Heart right ventricle (tissue), 16 donors: ENCODE measurements at regions of chr1 and their contacts with region 1.

Region 1: DNA sequence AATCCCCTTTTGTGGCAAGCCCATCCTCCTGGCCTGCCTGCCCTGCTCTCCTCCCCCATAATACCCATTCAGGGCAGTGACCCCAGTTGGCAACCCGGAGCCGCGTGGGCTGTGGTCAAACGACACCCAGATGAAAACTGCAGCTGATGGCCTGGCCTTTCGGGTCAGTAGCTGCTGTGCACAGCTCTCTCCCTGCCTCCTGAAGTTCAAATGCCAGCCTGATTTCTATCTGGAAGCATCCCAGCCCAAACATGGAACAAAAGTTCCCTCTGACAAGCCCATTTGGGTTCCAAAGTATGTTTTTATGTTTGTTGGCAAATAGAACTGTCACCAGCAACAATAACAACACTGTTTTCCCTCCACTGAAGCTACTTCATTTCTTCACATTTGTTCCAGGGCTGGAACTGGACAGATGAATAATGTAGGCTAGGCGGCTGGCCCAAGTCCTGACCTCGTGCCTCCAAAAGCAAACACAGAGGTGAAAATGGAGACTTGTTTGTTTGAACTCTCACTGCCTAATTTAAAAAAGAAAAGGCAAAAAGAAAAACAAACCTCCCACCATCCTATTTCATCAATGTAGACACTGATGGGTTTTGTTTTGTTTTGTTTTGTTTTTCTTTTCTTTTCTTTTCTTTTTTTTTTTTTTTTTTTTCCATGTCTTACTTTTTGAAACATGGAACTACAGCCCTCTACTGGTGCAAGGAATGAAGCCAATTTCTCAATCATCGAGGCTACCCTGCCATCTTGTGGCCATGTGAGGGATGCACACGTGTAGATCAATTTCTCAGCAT is 179.0 kb downstream of the ADSS2 start:
- DNase-seq: peak; percentile 25 to 58
- ATAC-seq: peak; percentile 72 to 94 (median 78)
- H3K4me3 ChIP-seq: no peak overlapping the region
- H3K27ac ChIP-seq: peak overlapping the region in 5 of 10 donors; percentile 2 to 46 (median 21)
- H3K4me1 ChIP-seq: peaks cover 0 to 19% (median 0%) of the 10 kb centered on the region in 9 donors
- H3K27me3 ChIP-seq: no peaks in the 10 kb centered on the region
- CTCF ChIP-seq: peak; percentile 84 to 98 (median 92)

Region 2: DNA sequence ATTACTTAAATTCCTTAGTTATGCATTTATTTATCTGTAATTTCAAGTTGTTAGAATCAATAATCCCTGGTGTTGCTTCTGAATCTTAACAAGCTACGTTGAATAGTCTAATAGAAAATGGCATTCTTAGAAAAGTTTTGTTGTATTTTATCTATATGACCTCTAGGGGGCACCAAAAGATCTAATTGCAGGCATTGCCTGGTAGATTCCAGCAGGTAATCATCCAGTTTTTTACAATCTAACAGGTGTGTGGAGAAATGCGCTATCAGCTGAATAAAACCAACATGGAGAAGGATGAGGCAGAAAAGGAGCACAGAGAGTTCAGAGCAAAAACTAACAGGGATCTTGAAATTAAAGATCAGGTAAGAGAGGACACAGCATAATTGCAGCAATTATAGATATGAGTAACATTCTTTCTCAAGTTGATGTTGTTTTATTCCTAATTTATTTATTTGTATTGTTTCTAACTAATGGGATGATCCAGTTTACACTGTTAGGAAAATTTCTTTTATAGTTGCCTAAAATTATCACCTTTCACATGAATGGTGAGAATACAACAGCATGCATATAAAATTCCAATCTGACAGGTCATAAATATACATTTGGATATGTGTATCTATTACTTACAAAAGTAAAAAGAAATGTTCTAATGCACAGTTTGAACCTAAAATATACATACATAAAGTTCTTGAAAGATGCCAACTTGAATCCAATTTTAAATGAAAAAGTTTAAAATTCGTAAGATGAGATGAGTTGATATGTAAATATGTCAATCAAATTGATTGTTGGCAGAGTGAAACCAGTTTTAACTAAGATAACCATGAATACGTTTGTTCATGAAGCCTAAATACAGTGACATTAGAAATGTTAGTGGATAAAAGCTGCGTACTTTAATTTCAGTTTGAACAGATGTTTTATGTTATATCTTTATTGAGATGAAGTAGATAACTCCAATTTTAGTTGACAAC is 928.4 kb before region 1 on chr1:
- intact Hi-C with region 1: loop called in 9 of 10 experiments (anchors 1 to 5 kb)
- DNase-seq: no peak
- ATAC-seq: peak in 2 of 8 donors; percentile 34 to 53
- H3K4me3 ChIP-seq: no peak overlapping the region
- H3K27ac ChIP-seq: no peak overlapping the region
- H3K4me1 ChIP-seq: peaks cover 0 to 6% (median 0%) of the 10 kb centered on the region in 9 donors
- H3K27me3 ChIP-seq: no peaks in the 10 kb centered on the region
- CTCF ChIP-seq: peak; percentile 58 to 84 (median 74)

Region 3: GRCh38 chr1:243471754-243472745 is 800.6 kb before region 1 on chr1:
- intact Hi-C with region 1: loop called in 1 of 10 experiments (anchors 10 kb)
- DNase-seq: no peak
- ATAC-seq: peak in 5 of 8 donors; percentile 22 to 41 (median 34)
- H3K4me3 ChIP-seq: peak overlapping the region in 1 of 10 donors; percentile 45
- H3K27ac ChIP-seq: no peak overlapping the region
- H3K4me1 ChIP-seq: peaks cover 0 to 24% (median 12%) of the 10 kb centered on the region in 9 donors
- H3K27me3 ChIP-seq: no peaks in the 10 kb centered on the region
- CTCF ChIP-seq: no peak

Region 4: DNA sequence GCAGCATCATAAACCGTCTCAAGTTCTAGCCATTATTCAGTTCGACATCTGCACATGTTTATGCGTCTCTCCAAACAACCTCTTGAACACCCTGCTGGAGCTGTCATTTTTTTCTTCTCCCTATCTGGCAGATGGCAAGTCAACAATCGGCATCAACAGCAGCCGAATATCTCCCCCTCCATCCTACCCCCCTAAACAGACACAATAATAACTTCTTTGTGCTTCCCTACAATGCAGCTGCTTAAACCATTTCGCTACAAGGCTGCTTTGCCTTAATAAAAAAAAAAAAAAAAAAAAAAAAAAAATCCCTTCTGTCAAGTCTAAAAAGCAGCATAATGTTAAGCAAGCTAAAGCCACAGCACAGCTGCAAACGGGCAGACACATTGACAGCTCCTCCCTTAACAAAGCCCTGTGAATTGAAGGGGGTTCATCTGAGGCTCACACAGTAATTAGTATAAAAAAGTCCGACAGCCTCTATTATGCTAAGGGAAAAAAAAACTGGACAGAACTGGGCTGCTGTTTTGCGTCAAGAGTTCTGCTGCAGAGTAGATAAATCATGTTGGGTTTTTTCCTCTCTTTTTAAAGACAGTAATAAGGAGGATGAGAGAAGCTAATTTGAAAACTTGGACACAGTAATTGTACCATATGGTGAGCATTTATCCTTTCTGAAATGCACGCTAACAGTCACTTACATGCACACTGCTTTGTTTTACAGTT is 559.0 kb before region 1 on chr1:
- intact Hi-C with region 1: loop called in 6 of 10 experiments (anchors 2 to 10 kb)
- DNase-seq: peak in 1 of 2 donors; percentile 17
- ATAC-seq: peak in 7 of 8 donors; percentile 31 to 89 (median 83)
- H3K4me3 ChIP-seq: peak overlapping the region in 3 of 10 donors; percentile 5 to 25 (median 11)
- H3K27ac ChIP-seq: peak overlapping the region in 3 of 10 donors; percentile 3 to 22 (median 10)
- H3K4me1 ChIP-seq: peaks cover 0 to 38% (median 11%) of the 10 kb centered on the region in 9 donors
- H3K27me3 ChIP-seq: no peaks in the 10 kb centered on the region
- CTCF ChIP-seq: no peak

Region 5: DNA sequence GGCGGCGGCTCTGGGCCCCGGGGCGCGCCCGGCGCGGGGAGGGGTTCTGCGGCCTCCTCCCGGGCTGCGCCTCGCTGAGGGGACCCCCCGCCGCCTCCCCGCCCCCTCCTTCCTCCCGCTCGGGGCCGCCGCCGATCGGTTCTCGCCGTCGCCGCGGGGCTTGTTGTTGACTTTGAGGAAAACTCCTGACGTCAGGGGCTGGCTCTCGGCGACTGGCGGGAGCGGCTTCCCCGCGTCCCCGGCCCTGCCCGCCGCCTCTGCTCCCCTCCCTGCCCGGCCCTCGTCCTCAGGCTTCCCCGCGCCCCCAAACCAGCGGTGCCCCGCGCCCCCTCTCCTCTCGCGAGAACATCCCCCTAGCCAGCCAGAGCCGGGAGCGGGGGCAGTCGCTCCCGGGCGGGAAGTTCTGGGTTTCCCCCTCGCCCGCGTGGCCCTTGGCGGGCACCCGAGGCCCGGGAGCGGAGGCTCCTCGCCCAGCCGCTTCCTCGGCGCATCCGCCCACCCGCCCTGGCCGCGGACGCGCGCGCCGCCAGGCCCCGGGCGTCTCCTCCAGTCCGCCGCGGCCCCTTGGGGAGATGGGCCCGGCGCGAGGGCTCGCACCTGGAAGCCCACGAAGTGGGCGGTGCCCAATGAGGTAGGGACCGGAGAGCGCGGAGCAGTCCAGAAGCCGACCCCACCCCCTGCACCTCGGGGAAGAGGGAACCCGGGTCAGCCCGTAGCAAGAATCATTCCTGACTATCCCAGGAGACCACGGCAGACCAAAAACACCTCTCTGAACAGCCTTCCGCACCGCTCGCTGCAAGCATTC is 422.0 kb before region 1 on chr1:
- intact Hi-C with region 1: loop called in 2 of 10 experiments (anchors 5 kb)
- DNase-seq: peak; percentile 78 to 81
- ATAC-seq: peak; percentile 49 to 76 (median 66)
- H3K4me3 ChIP-seq: peak overlapping the region; percentile 76 to 90 (median 81)
- H3K27ac ChIP-seq: peak overlapping the region; percentile 92 to 99 (median 96)
- H3K4me1 ChIP-seq: peaks cover 0 to 24% (median 14%) of the 10 kb centered on the region in 9 donors
- H3K27me3 ChIP-seq: peaks cover 0 to 42% (median 16%) of the 10 kb centered on the region in 7 donors
- CTCF ChIP-seq: no peak

Region 6: GRCh38 chr1:244021947-244022700 is 250.5 kb before region 1 on chr1:
- intact Hi-C with region 1: loop called in 2 of 10 experiments (anchors 10 kb)
- DNase-seq: no peak
- ATAC-seq: no peak
- H3K4me3 ChIP-seq: no peak overlapping the region
- H3K27ac ChIP-seq: no peak overlapping the region
- H3K4me1 ChIP-seq: no peaks in the 10 kb centered on the region
- H3K27me3 ChIP-seq: peaks cover 0 to 4% (median 0%) of the 10 kb centered on the region in 7 donors
- CTCF ChIP-seq: no peak

Region 7: DNA sequence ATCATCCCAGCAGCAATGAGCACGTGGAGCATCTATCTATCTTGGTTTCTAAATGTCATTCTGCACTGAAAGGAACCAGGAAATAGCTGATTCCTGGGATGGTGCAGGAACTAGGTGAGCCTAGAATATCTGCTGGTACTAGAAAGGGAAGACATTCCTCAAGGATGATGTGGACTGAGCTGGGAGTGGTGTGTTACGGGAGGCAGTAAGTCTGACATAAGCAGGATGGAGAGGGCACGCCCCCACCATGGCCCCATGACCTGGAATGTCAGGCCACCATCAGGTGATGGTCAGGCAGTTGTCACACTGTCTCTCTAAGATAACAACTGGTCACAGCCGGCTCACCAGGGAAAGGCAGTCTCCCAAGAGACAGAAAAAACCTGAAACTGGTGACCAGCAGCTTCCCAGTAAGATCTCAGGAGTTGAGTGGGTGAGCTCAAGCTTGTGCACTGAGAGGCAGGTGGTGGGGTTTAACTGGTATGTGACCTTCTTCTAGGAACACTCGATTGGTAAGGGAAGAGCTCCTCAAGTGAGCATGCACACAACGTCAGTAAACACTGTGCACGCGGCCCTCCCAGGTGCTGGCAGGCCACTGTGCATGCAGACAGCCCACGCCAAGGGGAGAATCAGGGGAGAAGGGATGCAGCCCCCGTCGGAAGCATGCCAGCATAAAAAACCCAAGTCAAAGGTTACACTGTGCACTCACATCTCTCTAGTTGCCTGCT is 30.4 kb after region 1 on chr1:
- intact Hi-C with region 1: loop called in 1 of 10 experiments (anchors 1 kb)
- DNase-seq: no peak
- ATAC-seq: no peak
- H3K4me3 ChIP-seq: no peak overlapping the region
- H3K27ac ChIP-seq: peak overlapping the region in 1 of 10 donors; percentile 78
- H3K4me1 ChIP-seq: peaks cover 0 to 40% (median 0%) of the 10 kb centered on the region in 9 donors
- H3K27me3 ChIP-seq: peaks cover 0 to 5% (median 0%) of the 10 kb centered on the region in 7 donors
- CTCF ChIP-seq: no peak